ENCODE measurements at regions of chr3 and their contacts with region 1.

Region 1: DNA sequence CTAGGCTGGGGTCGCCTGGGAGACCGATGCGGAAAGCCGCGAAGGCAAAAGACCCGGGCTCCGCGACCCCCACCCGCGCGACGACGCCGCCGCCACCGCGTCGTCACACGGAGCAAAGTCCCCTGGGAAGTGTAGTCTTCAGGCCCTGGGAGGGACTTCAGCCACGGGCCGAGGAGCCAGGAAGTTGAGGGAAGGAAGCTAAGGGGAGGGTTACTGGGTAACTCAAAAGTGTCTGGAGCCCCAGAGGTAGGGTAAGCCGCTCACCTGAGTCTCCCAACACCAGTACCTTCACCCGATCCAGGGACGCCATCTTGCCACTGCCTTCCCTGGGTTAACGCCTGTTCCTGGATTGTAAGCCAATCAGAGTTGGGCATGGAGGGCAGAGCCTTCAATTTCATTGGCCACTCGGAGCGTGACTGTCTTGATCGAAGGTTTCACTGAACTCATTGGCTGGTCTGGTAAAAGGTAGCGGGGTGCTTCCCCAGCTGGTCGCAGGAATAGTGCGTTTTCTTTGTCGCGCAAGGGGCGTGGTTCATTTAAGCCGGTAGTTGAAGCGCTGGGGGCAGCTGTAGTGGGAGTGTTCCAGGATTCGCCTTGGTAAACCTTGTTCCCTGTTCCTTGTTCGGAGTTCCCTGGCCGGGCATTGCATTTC is at the starts of genes GTF2E1 and RABL3:
- DNase-seq: peak; percentile 98
- H3K4me3 Mint-ChIP-seq: peak within 1 kb of the TSS; percentile 80
- H3K27ac Mint-ChIP-seq: peak within 1 kb of the TSS; percentile 95
- H3K4me1 Mint-ChIP-seq: peaks cover 45% of the 10 kb centered on the region
- H3K27me3 Mint-ChIP-seq: no peaks in the 10 kb centered on the region
- total RNA-seq, gene GTF2E1: 28.7 to 34.5 TPM
- total RNA-seq, gene RABL3: 22.3 to 24.7 TPM

Region 2: DNA sequence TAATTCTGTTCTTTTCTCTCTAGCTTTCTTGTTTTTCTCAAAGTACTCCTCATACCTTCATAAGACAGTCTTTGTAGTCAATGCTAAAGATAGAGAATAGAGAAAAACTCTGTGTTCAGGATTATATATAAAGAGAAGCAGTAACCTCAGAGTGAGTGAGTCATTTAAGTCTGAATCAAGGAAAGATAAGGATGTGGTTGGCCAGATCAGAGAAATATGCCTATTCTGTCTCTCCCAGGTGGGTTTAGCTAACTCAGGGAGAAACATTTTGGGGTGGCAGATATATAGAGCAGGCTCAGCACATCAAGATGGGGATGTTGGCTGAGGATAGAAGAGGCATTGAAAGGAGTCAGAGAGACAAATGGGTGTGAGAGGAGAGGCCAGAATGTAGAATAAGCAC is 31.6 kb after region 1 on chr3:
- CTCF ChIA-PET with region 1: interaction called, 3 read pairs
- POLR2A ChIA-PET with region 1: interaction called, 18 read pairs
- DNase-seq: no peak
- H3K4me3 Mint-ChIP-seq: no peak overlapping the region
- H3K27ac Mint-ChIP-seq: no peak overlapping the region
- H3K4me1 Mint-ChIP-seq: peaks cover 10% of the 10 kb centered on the region
- H3K27me3 Mint-ChIP-seq: no peaks in the 10 kb centered on the region

Measured in activated CD4-positive, alpha-beta memory T cell treated with anti-CD3 and anti-CD28 coated beads, Interleukin-2, amount 10 ng/mL, durations not matched to agents 7 days and 5 days (primary cell).